ENCODE measurements at regions of chr12 and their contacts with region 1.

Region 1: GRCh38 chr12:8032242-8033152 is at the start of gene FOXJ2:
- DNase-seq: peak; percentile 69
- ATAC-seq: peak; percentile 65
- H3K4me3 Mint-ChIP-seq: peak within 1 kb of the TSS; percentile 86
- H3K27ac Mint-ChIP-seq: peak within 1 kb of the TSS; percentile 90
- H3K4me1 Mint-ChIP-seq: peaks cover 53% of the 10 kb centered on the region
- H3K27me3 Mint-ChIP-seq: no peaks in the 10 kb centered on the region
- CTCF ChIP-seq: no peak
- total RNA-seq, gene FOXJ2: 10.3 to 12.7 TPM (median 10.4 TPM) in 3 replicates

Region 2: GRCh38 chr12:8011331-8011730 is 21.2 kb before region 1 on chr12:
- CTCF ChIA-PET with region 1: no interaction called
- POLR2A ChIA-PET with region 1: no interaction called
- DNase-seq: no peak
- ATAC-seq: no peak
- H3K4me3 Mint-ChIP-seq: no peak overlapping the region
- H3K27ac Mint-ChIP-seq: no peak overlapping the region
- H3K4me1 Mint-ChIP-seq: no peaks in the 10 kb centered on the region
- H3K27me3 Mint-ChIP-seq: no peaks in the 10 kb centered on the region
- CTCF ChIP-seq: no peak

Region 3: GRCh38 chr12:8045952-8046944 is 13.8 kb after region 1 on chr12:
- CTCF ChIA-PET with region 1: interaction called, 18 read pairs
- POLR2A ChIA-PET with region 1: no interaction called
- DNase-seq: peak; percentile 86
- ATAC-seq: peak; percentile 88
- H3K4me3 Mint-ChIP-seq: no peak overlapping the region
- H3K27ac Mint-ChIP-seq: no peak overlapping the region
- H3K4me1 Mint-ChIP-seq: no peaks in the 10 kb centered on the region
- H3K27me3 Mint-ChIP-seq: no peaks in the 10 kb centered on the region
- CTCF ChIP-seq: peak; percentile 78

Measured in WTC11 (cell line).